ENCODE measurements at regions of chr9 and their contacts with region 1.

Region 1: GRCh38 chr9:4339357-4339756 is 39.5 kb upstream of the GLIS3 start:
- DNase-seq: peak; percentile 84 to 88
- ATAC-seq: peak; percentile 82 to 87
- H3K4me3 ChIP-seq: 0 out of 3 replicates have a peak overlapping the region, but pooled peaks have one; percentile 20
- H3K27ac ChIP-seq: peak overlapping the region; percentile 62 to 77
- H3K4me1 ChIP-seq: peaks cover 7% of the 10 kb centered on the region
- CTCF ChIP-seq: peak; percentile 97
- EP300 ChIP-seq: no peak
- POLR2A ChIP-seq: no peak
- RAD21 ChIP-seq: peak; percentile 92

Region 2: GRCh38 chr9:3732077-3733038 is 607.0 kb before region 1 on chr9:
- CTCF ChIA-PET with region 1: interaction called, 31 read pairs
- POLR2A ChIA-PET with region 1: no interaction called
- DNase-seq: peak; percentile 78 to 83
- ATAC-seq: peak; percentile 100
- H3K4me3 ChIP-seq: no peak overlapping the region
- H3K27ac ChIP-seq: peak overlapping the region; percentile 52 to 69
- H3K4me1 ChIP-seq: peaks cover 8% of the 10 kb centered on the region
- CTCF ChIP-seq: peak; percentile 90
- EP300 ChIP-seq: no peak
- POLR2A ChIP-seq: no peak
- RAD21 ChIP-seq: peak; percentile 97 to 98

Region 3: GRCh38 chr9:4297151-4297785 is 42.1 kb before region 1 on chr9:
- CTCF ChIA-PET with region 1: interaction called, 26 read pairs
- POLR2A ChIA-PET with region 1: interaction called, 8 read pairs
- DNase-seq: peak; percentile 87 to 92
- ATAC-seq: peak; percentile 60 to 73
- H3K4me3 ChIP-seq: peak overlapping the region; percentile 77
- H3K27ac ChIP-seq: peak overlapping the region; percentile 95 to 97
- H3K4me1 ChIP-seq: peaks cover 64% of the 10 kb centered on the region
- CTCF ChIP-seq: peak; percentile 64
- EP300 ChIP-seq: no peak
- POLR2A ChIP-seq: no peak; the same call in 1 of the 2 replicates
- RAD21 ChIP-seq: peak; percentile 60 to 65

Region 4: GRCh38 chr9:4306066-4306775 is 33.1 kb before region 1 on chr9:
- CTCF ChIA-PET with region 1: interaction called, 24 read pairs
- POLR2A ChIA-PET with region 1: interaction called, 3 read pairs
- DNase-seq: no peak
- ATAC-seq: no peak
- H3K4me3 ChIP-seq: no peak overlapping the region
- H3K27ac ChIP-seq: peak overlapping the region in 1 of 2 experiments; percentile 29; a peak in 3 of 6 replicates
- H3K4me1 ChIP-seq: peaks cover 48% of the 10 kb centered on the region
- CTCF ChIP-seq: no peak
- EP300 ChIP-seq: no peak
- POLR2A ChIP-seq: no peak
- RAD21 ChIP-seq: no peak

Region 5: DNA sequence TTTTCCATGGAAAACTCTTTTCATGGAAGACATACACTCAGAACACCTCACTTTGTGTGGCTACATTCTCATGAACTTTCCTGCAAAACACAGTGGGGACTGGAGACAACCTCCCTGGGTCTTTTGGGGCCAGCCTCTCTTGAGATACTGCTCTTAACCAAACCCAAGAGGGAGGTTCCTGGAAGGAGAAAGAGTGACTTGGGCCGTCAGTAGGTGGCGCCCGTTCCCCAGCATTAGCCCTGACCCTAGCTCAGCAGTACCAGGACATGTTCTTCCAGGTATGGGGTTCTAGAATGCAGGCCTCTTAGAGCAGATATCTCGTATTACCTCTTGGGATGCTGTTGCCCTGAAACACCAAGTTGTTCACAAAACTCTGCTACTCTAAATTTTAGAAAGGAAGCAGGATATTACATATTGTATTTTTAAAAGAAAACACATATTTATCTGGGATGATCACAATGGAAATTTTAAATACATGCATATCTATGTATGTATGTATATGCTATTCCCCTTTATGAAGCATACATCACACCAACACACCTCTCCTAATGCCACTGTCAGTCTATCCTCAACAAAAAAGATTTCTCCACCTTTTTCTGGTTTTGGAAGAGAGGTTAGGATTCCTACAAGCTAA is 23.7 kb before region 1 on chr9:
- CTCF ChIA-PET with region 1: interaction called, 109 read pairs
- POLR2A ChIA-PET with region 1: interaction called, 6 read pairs
- DNase-seq: peak; percentile 73 to 84
- ATAC-seq: peak; percentile 100
- H3K4me3 ChIP-seq: no peak overlapping the region
- H3K27ac ChIP-seq: peak overlapping the region in 1 of 2 experiments; percentile 4; a peak in 2 of 6 replicates
- H3K4me1 ChIP-seq: no peaks in the 10 kb centered on the region
- CTCF ChIP-seq: peak; percentile 94
- EP300 ChIP-seq: no peak
- POLR2A ChIP-seq: no peak
- RAD21 ChIP-seq: peak; percentile 95 to 97

Region 6: GRCh38 chr9:4327504-4328191 is 11.7 kb before region 1 on chr9:
- CTCF ChIA-PET with region 1: interaction called, 51 read pairs
- POLR2A ChIA-PET with region 1: no interaction called
- DNase-seq: no peak
- ATAC-seq: peak; percentile 38 to 40; a peak in 5 of 6 replicates
- H3K4me3 ChIP-seq: no peak overlapping the region
- H3K27ac ChIP-seq: no peak overlapping the region
- H3K4me1 ChIP-seq: peaks cover 7% of the 10 kb centered on the region; the same call in 1 of the 3 replicates
- CTCF ChIP-seq: no peak
- EP300 ChIP-seq: no peak
- POLR2A ChIP-seq: no peak
- RAD21 ChIP-seq: no peak

Region 7: GRCh38 chr9:4353236-4353635 is 13.9 kb after region 1 on chr9:
- CTCF ChIA-PET with region 1: interaction called, 16 read pairs
- POLR2A ChIA-PET with region 1: no interaction called
- DNase-seq: no peak
- ATAC-seq: no peak
- H3K4me3 ChIP-seq: no peak overlapping the region
- H3K27ac ChIP-seq: no peak overlapping the region
- H3K4me1 ChIP-seq: no peaks in the 10 kb centered on the region
- CTCF ChIP-seq: no peak
- EP300 ChIP-seq: no peak
- POLR2A ChIP-seq: no peak
- RAD21 ChIP-seq: no peak

Region 8: DNA sequence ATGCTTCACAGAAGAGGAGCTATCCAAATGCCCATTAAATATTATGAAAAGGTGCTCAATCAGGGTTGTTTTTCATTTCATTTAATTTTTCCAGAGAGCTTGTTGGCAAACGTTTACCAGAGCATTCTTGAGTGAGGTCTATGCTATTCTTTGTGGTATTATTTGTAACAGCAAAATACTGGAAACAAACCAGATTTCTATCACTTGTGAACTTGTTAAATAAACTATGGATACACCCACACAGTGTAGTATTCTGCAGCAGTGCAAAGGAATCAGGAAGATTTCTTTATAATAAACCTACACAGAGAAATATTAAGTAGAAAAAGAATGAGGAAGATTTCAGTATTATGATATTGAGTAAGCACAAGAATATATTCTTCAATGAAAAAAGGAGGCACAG is 135.9 kb after region 1 on chr9:
- CTCF ChIA-PET with region 1: no interaction called
- POLR2A ChIA-PET with region 1: no interaction called
- DNase-seq: no peak
- ATAC-seq: no peak
- H3K4me3 ChIP-seq: no peak overlapping the region
- H3K27ac ChIP-seq: no peak overlapping the region
- H3K4me1 ChIP-seq: no peaks in the 10 kb centered on the region
- CTCF ChIP-seq: no peak
- EP300 ChIP-seq: no peak
- POLR2A ChIP-seq: no peak
- RAD21 ChIP-seq: no peak

Measured in A549 (cell line).